ENCODE measurements at regions of chr14 and their contacts with region 1.

Region 1: GRCh38 chr14:104768437-104769323 is 15.7 kb downstream of the SIVA1 start:
- DNase-seq: peak; percentile 48 to 94
- H3K4me3 ChIP-seq: no peak overlapping the region
- H3K27ac ChIP-seq: peak overlapping the region in 1 of 2 donors; percentile 37
- H3K4me1 ChIP-seq: peaks cover 3 to 8% of the 10 kb centered on the region in 2 donors
- H3K27me3 ChIP-seq: no peaks in the 10 kb centered on the region
- CTCF ChIP-seq: peak; percentile 86 to 97 (median 94)

Region 2: GRCh38 chr14:104826189-104826860 is 57.6 kb after region 1 on chr14:
- intact Hi-C with region 1: loop called (anchors 1 kb)
- DNase-seq: peak; percentile 54 to 94
- H3K4me3 ChIP-seq: peak overlapping the region; percentile 63 to 92
- H3K27ac ChIP-seq: peak overlapping the region; percentile 7 to 59
- H3K4me1 ChIP-seq: peaks cover 8 to 12% of the 10 kb centered on the region in 2 donors
- H3K27me3 ChIP-seq: no peaks in the 10 kb centered on the region
- CTCF ChIP-seq: peak; percentile 56 to 83 (median 79)

Region 3: GRCh38 chr14:104865644-104866441 is 97.2 kb after region 1 on chr14:
- intact Hi-C with region 1: loop called (anchors 2 kb)
- DNase-seq: peak; percentile 18 to 88
- H3K4me3 ChIP-seq: peak overlapping the region; percentile 84 to 90
- H3K27ac ChIP-seq: peak overlapping the region; percentile 55 to 80
- H3K4me1 ChIP-seq: peaks cover 4 to 16% of the 10 kb centered on the region in 2 donors
- H3K27me3 ChIP-seq: no peaks in the 10 kb centered on the region
- CTCF ChIP-seq: no peak

Region 4: GRCh38 chr14:105034314-105035039 is 265.8 kb after region 1 on chr14:
- intact Hi-C with region 1: no loop called
- DNase-seq: no peak
- H3K4me3 ChIP-seq: no peak overlapping the region
- H3K27ac ChIP-seq: no peak overlapping the region
- H3K4me1 ChIP-seq: no peaks in the 10 kb centered on the region
- H3K27me3 ChIP-seq: no peaks in the 10 kb centered on the region
- CTCF ChIP-seq: no peak